Activated CD4-positive, alpha-beta memory T cell treated with anti-CD3 and anti-CD28 coated beads for 36 hours (primary cell): ENCODE measurements at regions of chr7 and their contacts with region 1.

Region 1: GRCh38 chr7:50142425-50143017 is 49.5 kb upstream of the ZPBP start:
- DNase-seq: no peak
- H3K4me3 Mint-ChIP-seq: peak overlapping the region; percentile 14
- H3K27ac Mint-ChIP-seq: peak overlapping the region; percentile 59
- H3K4me1 Mint-ChIP-seq: peaks cover 28% of the 10 kb centered on the region
- H3K27me3 Mint-ChIP-seq: peaks cover 2% of the 10 kb centered on the region

Region 2: DNA sequence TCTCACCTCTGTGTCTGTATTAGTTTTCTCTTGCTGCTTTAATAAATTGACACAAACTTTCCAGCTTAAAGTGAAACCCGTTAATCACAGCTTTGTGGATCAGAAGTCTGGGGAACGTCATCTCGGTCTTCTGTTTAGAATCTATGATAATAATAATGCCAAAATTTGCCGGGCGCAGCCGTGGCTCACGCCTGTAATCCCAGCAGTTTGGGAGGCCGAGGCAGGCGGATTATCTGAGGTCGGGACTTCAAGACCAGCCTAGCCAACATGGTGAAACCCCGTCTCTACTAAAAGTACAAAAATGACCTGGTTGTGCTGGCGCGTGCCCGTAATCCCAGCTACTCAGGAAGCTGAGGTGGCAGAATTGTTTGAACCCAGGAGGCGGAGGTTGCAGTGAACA is 40.6 kb before region 1 on chr7:
- CTCF ChIA-PET with region 1: no interaction called
- POLR2A ChIA-PET with region 1: no interaction called
- intact Hi-C with region 1: no loop called
- DNase-seq: no peak
- H3K4me3 Mint-ChIP-seq: no peak overlapping the region
- H3K27ac Mint-ChIP-seq: no peak overlapping the region
- H3K4me1 Mint-ChIP-seq: no peaks in the 10 kb centered on the region
- H3K27me3 Mint-ChIP-seq: peaks cover 12% of the 10 kb centered on the region

Region 3: DNA sequence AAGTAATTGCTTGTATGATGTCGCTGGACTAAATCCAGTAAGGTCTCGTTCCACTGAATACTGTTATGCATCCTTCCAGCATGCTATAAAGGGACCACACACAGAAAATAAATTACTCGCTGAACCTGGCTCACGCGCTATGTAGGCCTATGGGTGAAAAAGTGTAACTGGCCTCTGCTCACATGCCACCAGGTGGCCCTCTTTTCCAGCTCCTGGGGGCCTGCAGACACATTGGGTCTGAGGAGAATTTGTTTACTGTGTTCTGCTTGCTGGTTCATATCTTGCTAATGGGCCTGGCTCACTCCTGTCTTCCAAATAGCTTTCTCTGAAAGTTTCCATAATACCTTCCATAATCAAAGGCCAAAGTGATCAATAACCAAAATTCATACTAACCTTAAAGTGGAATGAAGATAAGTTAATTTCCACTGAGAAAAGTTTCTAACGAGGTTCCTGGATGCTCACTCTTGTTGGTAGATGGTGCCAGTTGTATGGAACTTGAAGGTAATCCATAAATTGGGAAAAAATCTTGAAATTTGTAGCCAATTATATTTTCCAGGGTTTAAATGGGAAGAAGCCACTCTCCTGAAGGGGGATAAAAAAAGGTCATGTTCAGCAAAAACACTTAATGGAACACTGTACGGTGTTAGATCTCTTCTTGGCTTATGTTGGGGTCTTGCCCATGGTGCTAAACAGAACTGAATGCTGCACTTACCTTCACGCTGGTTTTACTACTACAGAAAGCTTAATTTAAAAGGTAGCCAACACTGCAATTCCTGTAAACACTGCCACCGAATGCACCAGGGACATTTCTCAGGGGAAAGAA is 22.5 kb before region 1 on chr7:
- CTCF ChIA-PET with region 1: no interaction called
- POLR2A ChIA-PET with region 1: no interaction called
- intact Hi-C with region 1: no loop called
- DNase-seq: peak; percentile 51
- H3K4me3 Mint-ChIP-seq: no peak overlapping the region
- H3K27ac Mint-ChIP-seq: no peak overlapping the region
- H3K4me1 Mint-ChIP-seq: no peaks in the 10 kb centered on the region
- H3K27me3 Mint-ChIP-seq: peaks cover 6% of the 10 kb centered on the region

Region 4: DNA sequence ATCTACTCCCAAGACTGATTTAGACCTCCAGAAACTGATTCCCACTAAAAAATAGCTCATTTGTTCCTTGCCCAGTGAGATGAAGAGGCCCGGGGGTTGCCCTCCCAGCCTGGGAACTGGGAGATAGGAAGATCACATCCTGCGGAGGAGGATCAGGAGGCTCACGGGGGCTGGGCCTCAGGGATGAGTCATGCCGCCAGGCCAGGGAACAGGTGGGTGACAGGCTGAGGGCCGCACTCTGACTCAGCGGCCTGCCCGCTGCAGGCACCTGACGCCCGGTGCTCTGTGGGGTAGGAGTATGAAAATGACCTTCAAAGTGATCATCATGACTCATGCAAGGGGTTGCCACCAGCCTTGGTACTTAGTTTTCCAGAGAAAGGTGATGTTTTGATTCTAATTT is 55.0 kb after region 1 on chr7:
- CTCF ChIA-PET with region 1: interaction called, 4 read pairs
- POLR2A ChIA-PET with region 1: no interaction called
- intact Hi-C with region 1: loop called (anchors 2 kb)
- DNase-seq: peak; percentile 90
- H3K4me3 Mint-ChIP-seq: peak overlapping the region; percentile 13
- H3K27ac Mint-ChIP-seq: peak overlapping the region; percentile 58
- H3K4me1 Mint-ChIP-seq: peaks cover 34% of the 10 kb centered on the region
- H3K27me3 Mint-ChIP-seq: peaks cover 2% of the 10 kb centered on the region

Region 5: GRCh38 chr7:50369143-50370026 is 226.9 kb after region 1 on chr7:
- CTCF ChIA-PET with region 1: interaction called, 10 read pairs
- POLR2A ChIA-PET with region 1: no interaction called
- intact Hi-C with region 1: loop called (anchors 1 kb)
- DNase-seq: peak; percentile 56
- H3K4me3 Mint-ChIP-seq: no peak overlapping the region
- H3K27ac Mint-ChIP-seq: peak overlapping the region; percentile 93
- H3K4me1 Mint-ChIP-seq: peaks cover 97% of the 10 kb centered on the region
- H3K27me3 Mint-ChIP-seq: no peaks in the 10 kb centered on the region

Region 6: GRCh38 chr7:50632561-50633413 is 490.3 kb after region 1 on chr7:
- CTCF ChIA-PET with region 1: interaction called, 5 read pairs
- POLR2A ChIA-PET with region 1: no interaction called
- intact Hi-C with region 1: loop called (anchors 1 kb)
- DNase-seq: peak; percentile 65
- H3K4me3 Mint-ChIP-seq: no peak overlapping the region
- H3K27ac Mint-ChIP-seq: no peak overlapping the region
- H3K4me1 Mint-ChIP-seq: peaks cover 7% of the 10 kb centered on the region
- H3K27me3 Mint-ChIP-seq: peaks cover 2% of the 10 kb centered on the region